Thyroid gland (tissue), 4 donors: ENCODE measurements at regions of chr15 and their contacts with region 1.

Region 1: GRCh38 chr15:78241007-78241406 is 6.6 kb upstream of the ACSBG1 start:
- DNase-seq: peak; percentile 85 to 86
- H3K4me3 ChIP-seq: no peak overlapping the region
- H3K27ac ChIP-seq: no peak overlapping the region
- H3K4me1 ChIP-seq: peaks cover 0 to 9% of the 10 kb centered on the region in 2 donors
- H3K27me3 ChIP-seq: no peaks in the 10 kb centered on the region
- CTCF ChIP-seq: peak; percentile 57 to 88 (median 76)
- POLR2A ChIP-seq: no peak

Region 2: DNA sequence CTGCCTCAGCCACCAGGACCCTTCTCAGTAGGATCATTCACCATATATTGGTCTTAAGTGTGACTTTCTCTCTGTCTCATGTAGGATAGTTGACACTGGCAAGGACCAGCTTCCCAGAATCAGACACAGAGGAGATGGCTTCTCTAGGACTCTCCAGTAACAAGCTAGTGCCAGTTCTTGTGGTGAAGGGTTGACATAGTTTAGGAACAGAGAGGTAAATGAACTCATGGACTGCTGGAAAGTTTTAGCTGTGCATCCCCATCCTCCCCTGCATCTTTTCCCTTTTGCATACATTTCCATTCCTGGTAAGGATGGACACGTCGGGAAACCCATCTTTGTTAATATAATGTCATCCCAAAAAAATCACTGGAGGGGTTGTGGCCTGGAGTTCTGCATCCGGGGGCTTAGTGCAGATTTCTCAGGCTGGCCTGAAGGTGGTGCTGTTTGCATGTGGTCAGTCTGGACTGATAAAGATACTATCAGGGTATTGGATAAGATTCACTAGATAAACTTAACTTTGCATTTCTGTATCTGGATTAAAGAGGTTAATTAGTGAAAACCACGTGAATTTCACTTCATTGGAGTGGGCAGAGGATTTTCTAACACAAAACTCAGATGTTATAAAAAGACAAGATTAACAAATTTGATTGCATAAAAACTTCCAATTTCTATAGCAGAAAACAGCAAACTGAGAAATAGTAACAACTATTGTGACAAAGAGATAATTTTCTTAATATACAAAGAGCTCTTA is 274.3 kb before region 1 on chr15:
- intact Hi-C with region 1: loop called (anchors 5 kb)
- DNase-seq: peak; percentile 32 to 53
- H3K4me3 ChIP-seq: no peak overlapping the region
- H3K27ac ChIP-seq: no peak overlapping the region
- H3K4me1 ChIP-seq: no peaks in the 10 kb centered on the region
- H3K27me3 ChIP-seq: no peaks in the 10 kb centered on the region
- CTCF ChIP-seq: peak; percentile 49 to 86 (median 83)
- POLR2A ChIP-seq: no peak

Region 3: GRCh38 chr15:78108299-78109084 is 132.5 kb before region 1 on chr15:
- intact Hi-C with region 1: loop called (anchors 2 kb)
- DNase-seq: peak; percentile 84 to 90
- H3K4me3 ChIP-seq: no peak overlapping the region
- H3K27ac ChIP-seq: no peak overlapping the region
- H3K4me1 ChIP-seq: no peaks in the 10 kb centered on the region
- H3K27me3 ChIP-seq: no peaks in the 10 kb centered on the region
- CTCF ChIP-seq: peak; percentile 85 to 97 (median 95)
- POLR2A ChIP-seq: no peak